Activated naive CD8-positive, alpha-beta T cell treated with anti-CD3 and anti-CD28 coated beads, Interleukin-2, amount 10 ng/mL, durations not matched to agents 7 days and 5 days (primary cell): ENCODE measurements at regions of chr1 and their contacts with region 1.

Region 1: GRCh38 chr1:116763787-116764465 is 9.7 kb downstream of the CD2 start:
- DNase-seq: peak; percentile 58
- ATAC-seq: peak; percentile 20
- H3K4me3 Mint-ChIP-seq: peak overlapping the region; percentile 83
- H3K27ac Mint-ChIP-seq: peak overlapping the region; percentile 96
- H3K4me1 Mint-ChIP-seq: peaks cover 90% of the 10 kb centered on the region
- H3K27me3 Mint-ChIP-seq: no peaks in the 10 kb centered on the region

Region 2: GRCh38 chr1:116737020-116737854 is 26.7 kb before region 1 on chr1:
- POLR2A ChIA-PET with region 1: interaction called, 85 read pairs
- DNase-seq: peak; percentile 81
- ATAC-seq: peak; percentile 57
- H3K4me3 Mint-ChIP-seq: peak overlapping the region; percentile 76
- H3K27ac Mint-ChIP-seq: peak overlapping the region; percentile 97
- H3K4me1 Mint-ChIP-seq: peaks cover 52% of the 10 kb centered on the region
- H3K27me3 Mint-ChIP-seq: no peaks in the 10 kb centered on the region

Region 3: DNA sequence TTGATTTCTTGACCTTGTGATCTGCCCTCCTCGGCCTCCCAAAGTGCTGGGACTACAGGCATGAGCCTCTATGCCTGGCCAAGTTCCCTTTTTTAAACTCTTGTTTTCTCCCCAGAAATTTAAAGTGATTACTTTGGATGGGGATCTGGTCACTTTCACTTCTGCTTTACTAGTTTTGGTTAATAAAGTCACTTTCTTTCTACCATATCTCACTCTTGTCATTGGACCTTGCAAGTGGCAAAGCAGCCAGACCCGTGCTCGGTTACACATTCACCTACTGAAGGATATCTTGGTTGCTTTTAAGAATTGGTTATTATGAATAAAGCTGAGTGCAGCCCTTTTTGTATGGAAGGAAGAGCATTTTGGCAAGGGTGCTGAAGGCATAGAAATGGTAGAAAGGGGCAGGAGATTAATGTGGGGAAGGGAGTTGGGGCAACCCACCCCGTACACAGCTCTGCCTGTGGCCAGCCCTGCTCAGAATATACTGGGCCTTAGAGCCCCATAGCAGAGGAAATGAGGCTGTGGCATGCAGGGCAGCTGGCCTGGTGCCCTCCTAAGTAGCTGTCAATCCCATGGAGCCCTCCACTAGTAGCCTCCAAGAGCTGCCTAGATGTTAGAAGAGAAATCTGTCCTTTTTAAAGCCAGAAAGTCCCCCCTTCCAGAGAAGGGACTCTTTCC is 31.0 kb after region 1 on chr1:
- POLR2A ChIA-PET with region 1: interaction called, 316 read pairs
- DNase-seq: no peak
- ATAC-seq: peak; percentile 19
- H3K4me3 Mint-ChIP-seq: peak overlapping the region; percentile 2
- H3K27ac Mint-ChIP-seq: peak overlapping the region; percentile 47
- H3K4me1 Mint-ChIP-seq: peaks cover 48% of the 10 kb centered on the region
- H3K27me3 Mint-ChIP-seq: no peaks in the 10 kb centered on the region

Region 4: GRCh38 chr1:116826818-116827606 is 63.1 kb after region 1 on chr1:
- POLR2A ChIA-PET with region 1: interaction called, 13 read pairs
- DNase-seq: peak; percentile 53
- ATAC-seq: peak; percentile 92
- H3K4me3 Mint-ChIP-seq: peak overlapping the region; percentile 62
- H3K27ac Mint-ChIP-seq: peak overlapping the region; percentile 95
- H3K4me1 Mint-ChIP-seq: peaks cover 40% of the 10 kb centered on the region
- H3K27me3 Mint-ChIP-seq: no peaks in the 10 kb centered on the region

Region 5: DNA sequence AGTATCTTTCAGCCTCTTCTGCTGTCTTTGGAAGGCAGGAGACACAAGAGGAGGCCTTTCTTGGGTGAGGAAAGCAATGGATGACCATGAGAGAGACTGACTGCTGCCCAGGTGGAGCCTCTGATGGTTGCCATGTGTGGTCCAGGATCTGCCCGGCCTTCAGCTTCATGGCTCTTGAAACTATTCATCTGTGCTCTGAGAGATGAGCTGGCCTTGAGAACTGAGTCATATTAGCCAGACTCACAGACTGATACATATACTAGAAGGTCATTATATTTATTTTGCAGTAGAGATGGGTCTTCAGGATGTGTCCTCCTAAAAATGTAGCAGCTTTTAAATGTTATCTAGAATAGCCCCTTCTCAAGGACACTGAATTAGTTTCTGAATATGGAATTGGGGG is 179.5 kb after region 1 on chr1:
- POLR2A ChIA-PET with region 1: no interaction called
- DNase-seq: no peak
- ATAC-seq: no peak
- H3K4me3 Mint-ChIP-seq: no peak overlapping the region
- H3K27ac Mint-ChIP-seq: no peak overlapping the region
- H3K4me1 Mint-ChIP-seq: peaks cover 19% of the 10 kb centered on the region
- H3K27me3 Mint-ChIP-seq: no peaks in the 10 kb centered on the region

Region 6: GRCh38 chr1:117188816-117189437 is 425.0 kb after region 1 on chr1:
- POLR2A ChIA-PET with region 1: no interaction called
- DNase-seq: no peak
- ATAC-seq: no peak
- H3K4me3 Mint-ChIP-seq: no peak overlapping the region
- H3K27ac Mint-ChIP-seq: no peak overlapping the region
- H3K4me1 Mint-ChIP-seq: no peaks in the 10 kb centered on the region
- H3K27me3 Mint-ChIP-seq: peaks cover 9% of the 10 kb centered on the region